HepG2 (cell line): ENCODE measurements at regions of chr9 and their contacts with region 1.

Region 1: DNA sequence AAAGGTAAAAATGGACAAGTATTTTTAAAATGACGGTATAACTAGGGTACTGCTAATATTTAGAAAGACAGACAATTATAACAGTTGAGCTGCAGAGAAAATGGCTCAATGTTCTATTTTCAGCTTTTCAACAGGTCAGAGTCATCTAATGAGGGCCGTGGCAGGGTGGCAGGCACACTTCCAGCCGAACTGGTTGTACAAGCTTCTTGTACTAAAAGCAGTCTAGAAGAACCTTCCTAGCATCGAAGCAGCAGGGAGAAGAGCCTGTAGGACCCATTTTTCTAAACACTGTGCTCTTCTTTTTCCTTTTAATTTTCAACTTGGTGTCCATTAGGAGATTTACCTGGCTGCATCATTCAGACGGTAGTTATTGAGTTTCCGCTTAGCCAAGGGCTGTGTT is 85.6 kb downstream of the SLC28A3 start:
- DNase-seq: no peak
- ATAC-seq: no peak
- H3K4me3 ChIP-seq: no peak overlapping the region
- H3K27ac ChIP-seq: no peak overlapping the region
- H3K4me1 ChIP-seq: no peaks in the 10 kb centered on the region
- H3K27me3 ChIP-seq: peaks cover 1 to 43% of the 10 kb centered on the region in 2 experiments; a peak in 4 of 5 replicates
- CTCF ChIP-seq: no peak
- EP300 ChIP-seq: no peak
- POLR2A ChIP-seq: no peak
- RAD21 ChIP-seq: no peak

Region 2: DNA sequence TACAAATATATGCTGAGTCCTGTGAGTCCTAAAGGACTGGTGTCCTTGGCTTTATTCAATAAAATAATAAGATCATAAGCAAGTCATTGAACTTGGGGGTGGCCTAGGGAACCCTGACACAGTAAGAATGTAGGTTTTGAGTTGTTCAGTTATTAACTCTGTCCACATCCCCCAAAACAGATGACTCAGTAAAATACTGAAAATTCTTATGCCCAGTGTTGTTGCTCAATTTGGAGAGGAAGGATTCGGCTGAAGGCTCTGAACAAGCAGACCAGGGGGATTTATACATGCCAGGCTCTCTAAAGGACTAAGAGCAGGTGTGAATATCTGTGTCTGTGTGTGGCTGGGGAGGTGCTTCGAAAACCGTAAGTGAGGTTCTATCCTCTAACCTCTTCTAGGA is 100.7 kb before region 1 on chr9:
- CTCF ChIA-PET with region 1: no interaction called
- POLR2A ChIA-PET with region 1: no interaction called
- in situ Hi-C with region 1: no loop called
- intact Hi-C with region 1: no loop called
- DNase-seq: no peak
- ATAC-seq: no peak
- H3K4me3 ChIP-seq: no peak overlapping the region
- H3K27ac ChIP-seq: no peak overlapping the region
- H3K4me1 ChIP-seq: no peaks in the 10 kb centered on the region
- H3K27me3 ChIP-seq: peaks cover 0 to 4% of the 10 kb centered on the region in 2 experiments; a peak in 1 of 5 replicates
- CTCF ChIP-seq: no peak
- EP300 ChIP-seq: no peak
- POLR2A ChIP-seq: no peak
- RAD21 ChIP-seq: no peak

Region 3: DNA sequence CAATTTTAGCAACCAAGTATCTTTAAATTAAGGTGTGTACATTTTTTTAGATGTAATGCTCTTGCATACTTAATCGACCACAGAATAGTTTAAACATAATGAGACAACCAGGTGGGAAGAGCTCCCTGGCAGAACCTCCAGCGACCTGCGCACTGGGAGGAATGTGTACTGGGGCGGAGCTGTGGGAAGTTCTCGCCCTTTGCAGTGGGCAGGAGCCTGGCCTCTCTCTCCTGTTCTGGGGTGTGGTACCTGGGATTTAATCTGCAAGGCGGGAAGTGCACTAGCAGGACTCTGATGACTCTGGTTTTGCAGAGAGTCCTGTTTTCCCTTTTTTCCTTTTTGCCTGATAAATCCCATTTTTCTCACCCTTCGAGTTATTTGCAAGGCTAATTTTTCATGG is 65.1 kb before region 1 on chr9:
- CTCF ChIA-PET with region 1: no interaction called
- POLR2A ChIA-PET with region 1: no interaction called
- in situ Hi-C with region 1: no loop called
- intact Hi-C with region 1: loop called (anchors 10 kb)
- DNase-seq: no peak
- ATAC-seq: no peak
- H3K4me3 ChIP-seq: no peak overlapping the region
- H3K27ac ChIP-seq: no peak overlapping the region
- H3K4me1 ChIP-seq: no peaks in the 10 kb centered on the region
- H3K27me3 ChIP-seq: peaks cover 0 to 34% of the 10 kb centered on the region in 2 experiments; a peak in 3 of 5 replicates
- CTCF ChIP-seq: no peak
- EP300 ChIP-seq: no peak
- POLR2A ChIP-seq: no peak
- RAD21 ChIP-seq: no peak

Region 4: GRCh38 chr9:84285381-84285780 is 30.4 kb after region 1 on chr9:
- CTCF ChIA-PET with region 1: no interaction called
- POLR2A ChIA-PET with region 1: no interaction called
- in situ Hi-C with region 1: no loop called
- intact Hi-C with region 1: no loop called
- DNase-seq: no peak
- ATAC-seq: no peak
- H3K4me3 ChIP-seq: no peak overlapping the region
- H3K27ac ChIP-seq: no peak overlapping the region
- H3K4me1 ChIP-seq: no peaks in the 10 kb centered on the region
- H3K27me3 ChIP-seq: peaks cover 1 to 8% of the 10 kb centered on the region in 2 experiments; a peak in 2 of 5 replicates
- CTCF ChIP-seq: no peak
- EP300 ChIP-seq: no peak
- POLR2A ChIP-seq: no peak
- RAD21 ChIP-seq: no peak

Region 5: GRCh38 chr9:84315278-84315877 is 60.4 kb after region 1 on chr9:
- CTCF ChIA-PET with region 1: no interaction called
- POLR2A ChIA-PET with region 1: no interaction called
- in situ Hi-C with region 1: no loop called
- intact Hi-C with region 1: no loop called
- DNase-seq: peak; percentile 23
- ATAC-seq: peak; percentile 64
- H3K4me3 ChIP-seq: no peak overlapping the region
- H3K27ac ChIP-seq: no peak overlapping the region
- H3K4me1 ChIP-seq: no peaks in the 10 kb centered on the region
- H3K27me3 ChIP-seq: peaks cover 0 to 4% of the 10 kb centered on the region in 2 experiments; a peak in 2 of 5 replicates
- CTCF ChIP-seq: peak; percentile 71
- EP300 ChIP-seq: no peak
- POLR2A ChIP-seq: no peak
- RAD21 ChIP-seq: 0 out of 2 replicates have a peak, but pooled peaks have one; percentile 26